AG04450 (cell line): ENCODE measurements at regions of chr5 and their contacts with region 1.

Region 1: DNA sequence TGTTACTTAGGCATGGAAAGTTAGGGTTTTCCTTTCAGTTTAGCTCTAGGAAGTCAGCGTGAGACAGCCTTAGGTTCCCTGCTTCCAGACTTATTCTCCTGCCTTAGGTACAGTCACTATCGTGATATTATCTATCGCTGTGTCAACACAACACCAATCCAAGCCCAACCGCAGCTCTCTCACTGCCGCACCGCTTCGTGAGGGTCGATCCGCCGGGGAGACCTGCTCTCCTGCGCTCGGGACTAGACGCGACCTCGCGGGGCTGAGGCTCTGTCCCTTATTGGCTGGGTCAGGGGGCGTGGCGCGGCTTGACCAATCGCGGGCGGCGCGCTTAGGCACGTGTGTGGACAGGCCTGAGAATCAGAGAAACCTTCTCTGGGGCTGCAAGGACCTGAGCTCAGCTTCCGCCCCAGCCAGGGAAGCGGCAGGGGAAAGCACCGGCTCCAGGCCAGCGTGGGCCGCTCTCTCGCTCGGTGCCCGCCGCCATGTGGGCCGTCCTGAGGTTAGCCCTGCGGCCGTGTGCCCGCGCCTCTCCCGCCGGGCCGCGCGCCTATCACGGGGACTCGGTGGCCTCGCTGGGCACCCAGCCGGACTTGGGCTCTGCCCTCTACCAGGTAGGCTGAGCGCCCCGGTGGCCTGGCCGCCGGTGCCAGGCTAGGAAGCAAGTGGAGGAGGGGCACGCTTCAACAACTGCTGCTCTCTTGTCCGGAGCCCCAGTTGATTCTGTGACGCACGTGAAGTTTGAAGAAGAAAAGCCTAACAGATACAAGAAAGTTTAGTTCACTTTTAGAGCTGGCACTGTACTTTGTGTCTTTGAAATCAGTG is at the start of gene MCCC2:
- DNase-seq: peak; percentile 82
- H3K4me3 ChIP-seq: peak within 1 kb of the TSS; percentile 79
- H3K27ac ChIP-seq: peak within 1 kb of the TSS; percentile 40
- H3K27me3 ChIP-seq: no peaks in the 10 kb centered on the region
- CTCF ChIP-seq: no peak
- polyA plus RNA-seq, gene MCCC2: 26.0 and 30.7 TPM in 2 replicates

Region 2: GRCh38 chr5:71601222-71602041 is 14.3 kb after region 1 on chr5:
- CTCF ChIA-PET with region 1: interaction called, 48 read pairs
- POLR2A ChIA-PET with region 1: no interaction called
- DNase-seq: peak; percentile 91
- H3K4me3 ChIP-seq: no peak overlapping the region
- H3K27ac ChIP-seq: peak overlapping the region; percentile 65
- H3K27me3 ChIP-seq: no peaks in the 10 kb centered on the region
- CTCF ChIP-seq: peak; percentile 68

Region 3: DNA sequence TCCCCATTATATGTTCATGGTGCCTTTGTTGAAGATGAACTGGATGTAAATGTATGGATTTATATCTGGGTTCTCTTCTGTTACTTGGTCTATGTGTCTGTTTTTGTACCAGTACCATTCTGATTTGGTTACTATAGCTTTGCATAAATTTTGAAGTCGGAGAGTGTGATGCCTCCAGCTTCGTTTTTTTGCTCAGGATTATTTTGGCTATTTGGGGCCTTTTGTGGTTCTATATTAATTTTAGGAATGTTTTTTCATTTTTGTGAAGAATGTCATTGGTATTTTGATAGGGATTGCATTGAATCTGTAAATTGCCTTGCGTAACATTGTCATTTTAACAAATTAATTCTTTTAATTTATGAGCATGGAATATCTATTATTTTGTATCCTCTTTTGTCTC is 956.7 kb after region 1 on chr5:
- CTCF ChIA-PET with region 1: interaction called, 11 read pairs
- POLR2A ChIA-PET with region 1: no interaction called
- DNase-seq: no peak
- H3K4me3 ChIP-seq: no peak overlapping the region
- H3K27ac ChIP-seq: no peak overlapping the region
- H3K27me3 ChIP-seq: no peaks in the 10 kb centered on the region
- CTCF ChIP-seq: no peak